Esophagus squamous epithelium (tissue), 5 donors: ENCODE measurements at regions of chr6 and their contacts with region 1.

Region 1: GRCh38 chr6:132483779-132484679 is 28.9 kb downstream of the STX7 start:
- DNase-seq: no peak
- H3K4me3 ChIP-seq: no peak overlapping the region
- H3K27ac ChIP-seq: no peak overlapping the region
- H3K4me1 ChIP-seq: peaks cover 0 to 34% (median 0%) of the 10 kb centered on the region in 3 donors
- H3K27me3 ChIP-seq: no peaks in the 10 kb centered on the region
- CTCF ChIP-seq: peak; percentile 47 to 79 (median 69)
- POLR2A ChIP-seq: no peak

Region 2: DNA sequence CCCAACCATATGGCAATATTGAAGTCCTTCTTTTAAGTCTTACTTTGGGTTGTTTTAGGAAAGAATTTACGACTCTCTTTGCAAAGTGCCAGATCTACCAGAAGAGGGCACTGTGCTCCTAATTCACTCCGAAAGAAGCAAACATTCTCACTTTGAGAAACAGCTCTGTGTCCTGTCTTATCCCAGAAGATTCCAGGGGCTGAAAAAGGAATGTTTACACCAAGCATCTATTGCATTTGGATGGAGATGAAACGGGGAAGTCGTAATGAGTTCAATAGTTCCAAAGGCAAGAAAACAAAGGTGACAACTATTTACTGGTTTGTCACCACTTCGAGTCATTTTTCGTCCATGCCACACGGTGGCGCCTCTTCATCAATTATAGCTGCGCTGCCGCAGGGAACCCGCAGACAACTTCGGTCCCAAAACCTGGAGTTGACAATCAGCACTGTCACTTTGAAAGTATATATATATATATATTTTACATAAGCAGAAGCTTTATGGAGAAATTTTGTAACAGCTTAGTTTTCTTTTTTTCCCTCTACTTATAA is 204.4 kb before region 1 on chr6:
- intact Hi-C with region 1: loop called (anchors 5 kb)
- DNase-seq: no peak
- H3K4me3 ChIP-seq: peak overlapping the region; percentile 24 to 68 (median 44)
- H3K27ac ChIP-seq: no peak overlapping the region
- H3K4me1 ChIP-seq: peaks cover 0 to 4% (median 0%) of the 10 kb centered on the region in 3 donors
- H3K27me3 ChIP-seq: peaks cover 0 to 10% (median 0%) of the 10 kb centered on the region in 4 donors
- CTCF ChIP-seq: peak; percentile 83 to 93 (median 86)
- POLR2A ChIP-seq: no peak

Region 3: GRCh38 chr6:132456700-132457143 is 27.3 kb before region 1 on chr6:
- intact Hi-C with region 1: no loop called
- DNase-seq: no peak
- H3K4me3 ChIP-seq: no peak overlapping the region
- H3K27ac ChIP-seq: no peak overlapping the region
- H3K4me1 ChIP-seq: no peaks in the 10 kb centered on the region
- H3K27me3 ChIP-seq: no peaks in the 10 kb centered on the region
- CTCF ChIP-seq: no peak
- POLR2A ChIP-seq: no peak

Region 4: DNA sequence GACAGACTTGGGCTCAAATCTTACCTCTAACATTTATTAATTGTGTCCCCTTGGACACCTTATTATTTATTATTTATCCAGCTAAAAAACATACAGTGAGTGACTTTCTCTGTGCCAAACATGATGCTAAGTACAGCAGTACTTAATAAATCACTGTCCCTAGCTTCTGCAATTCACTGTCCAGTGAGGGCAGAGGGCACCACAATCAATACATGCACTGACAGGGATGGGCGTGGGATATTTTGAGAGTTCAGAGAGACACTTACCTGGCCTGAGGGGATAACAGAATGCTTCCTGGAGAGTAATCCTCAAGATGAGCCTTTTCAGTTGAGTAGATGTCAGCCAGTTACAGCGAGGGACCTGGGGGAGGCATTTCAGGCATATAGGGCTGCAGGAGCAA is 149.3 kb after region 1 on chr6:
- intact Hi-C with region 1: no loop called
- DNase-seq: no peak
- H3K4me3 ChIP-seq: no peak overlapping the region
- H3K27ac ChIP-seq: no peak overlapping the region
- H3K4me1 ChIP-seq: no peaks in the 10 kb centered on the region
- H3K27me3 ChIP-seq: peaks cover 0 to 11% (median 0%) of the 10 kb centered on the region in 4 donors
- CTCF ChIP-seq: no peak
- POLR2A ChIP-seq: no peak

Region 5: GRCh38 chr6:132790450-132790849 is 306.4 kb after region 1 on chr6:
- intact Hi-C with region 1: no loop called
- DNase-seq: no peak
- H3K4me3 ChIP-seq: no peak overlapping the region
- H3K27ac ChIP-seq: no peak overlapping the region
- H3K4me1 ChIP-seq: no peaks in the 10 kb centered on the region
- H3K27me3 ChIP-seq: no peaks in the 10 kb centered on the region
- CTCF ChIP-seq: no peak
- POLR2A ChIP-seq: no peak